Ascending aorta (tissue), 2 donors: ENCODE measurements at regions of chr5 and their contacts with region 1.

Region 1: GRCh38 chr5:179697993-179698934 is 503 bp upstream of the CANX start:
- DNase-seq: peak; percentile 98 to 100
- H3K4me3 ChIP-seq: peak overlapping the region; percentile 90 to 94
- H3K27ac ChIP-seq: peak overlapping the region; percentile 98 to 99
- H3K4me1 ChIP-seq: peaks cover 0 to 11% of the 10 kb centered on the region in 2 donors
- H3K27me3 ChIP-seq: no peaks in the 10 kb centered on the region
- CTCF ChIP-seq: no peak

Region 2: DNA sequence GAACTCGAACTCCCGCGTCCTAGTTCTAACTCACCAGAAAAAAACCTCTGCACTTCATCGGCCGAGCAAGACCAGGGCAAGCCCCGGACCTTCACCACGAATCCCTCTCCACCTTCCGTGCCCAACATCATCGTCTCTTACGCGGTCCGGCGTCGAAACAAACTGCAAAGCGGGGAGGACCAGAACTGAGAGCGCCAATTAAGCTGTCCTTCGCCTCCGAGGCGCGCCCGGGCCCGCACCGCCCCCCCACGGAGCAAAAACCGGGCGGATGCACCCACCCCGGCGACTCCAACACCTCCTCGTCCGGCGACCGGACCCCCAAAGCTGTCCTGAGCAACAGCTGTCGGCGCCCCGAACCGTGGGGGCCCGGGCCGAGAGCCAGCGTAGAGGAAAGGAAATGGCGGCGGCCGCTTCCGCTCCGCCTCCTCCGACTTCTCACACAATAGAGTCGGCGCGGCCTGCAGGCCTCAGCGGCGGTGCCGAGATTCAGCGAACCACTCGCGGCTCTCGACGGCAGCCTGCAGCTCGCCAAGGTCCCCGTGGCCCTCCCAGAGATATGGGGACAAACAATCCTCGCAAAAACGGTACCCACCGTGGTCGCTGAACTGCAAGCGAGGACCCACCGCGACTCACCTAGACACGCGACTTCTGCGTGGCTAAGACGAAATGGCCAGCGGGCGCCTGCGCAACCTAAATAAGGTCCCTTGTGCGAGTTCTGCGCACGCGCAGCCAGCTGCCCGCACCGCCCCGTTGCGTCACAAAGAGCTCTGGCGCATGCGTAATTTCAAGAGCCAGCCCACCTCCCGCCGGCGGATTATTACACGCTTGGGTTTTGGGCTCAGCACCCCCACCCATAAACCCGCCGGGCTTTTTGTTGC is 75.0 kb before region 1 on chr5 and contains the start of gene HNRNPH1:
- intact Hi-C with region 1: loop called (anchors 2 kb)
- DNase-seq: peak; percentile 93 to 99
- H3K4me3 ChIP-seq: peak within 1 kb of the TSS; percentile 99 to 100
- H3K27ac ChIP-seq: peak within 1 kb of the TSS; percentile 100
- H3K4me1 ChIP-seq: peaks cover 0 to 40% of the 10 kb centered on the region in 2 donors
- H3K27me3 ChIP-seq: no peaks in the 10 kb centered on the region
- CTCF ChIP-seq: peak in 1 of 3 experiments; percentile 5
- total RNA-seq, gene HNRNPH1: 206 TPM

Region 3: GRCh38 chr5:180209137-180209581 is 510.9 kb after region 1 on chr5 and contains the start of gene RASGEF1C:
- intact Hi-C with region 1: no loop called
- DNase-seq: no peak
- H3K4me3 ChIP-seq: peak within 1 kb of the TSS; percentile 26 to 37
- H3K27ac ChIP-seq: no peak within 1 kb of the TSS
- H3K4me1 ChIP-seq: no peaks in the 10 kb centered on the region
- H3K27me3 ChIP-seq: no peaks in the 10 kb centered on the region
- CTCF ChIP-seq: peak in 1 of 3 experiments; percentile 5
- total RNA-seq, gene RASGEF1C: not detected